ENCODE measurements at regions of chr4 and their contacts with region 1.

Region 1: GRCh38 chr4:156060661-156061060 is 107.0 kb upstream of the CTSO start:
- DNase-seq: no peak
- ATAC-seq: no peak
- H3K4me3 ChIP-seq: no peak overlapping the region
- H3K27ac ChIP-seq: no peak overlapping the region
- H3K4me1 ChIP-seq: no peaks in the 10 kb centered on the region
- H3K27me3 ChIP-seq: no peaks in the 10 kb centered on the region
- CTCF ChIP-seq: no peak

Region 2: DNA sequence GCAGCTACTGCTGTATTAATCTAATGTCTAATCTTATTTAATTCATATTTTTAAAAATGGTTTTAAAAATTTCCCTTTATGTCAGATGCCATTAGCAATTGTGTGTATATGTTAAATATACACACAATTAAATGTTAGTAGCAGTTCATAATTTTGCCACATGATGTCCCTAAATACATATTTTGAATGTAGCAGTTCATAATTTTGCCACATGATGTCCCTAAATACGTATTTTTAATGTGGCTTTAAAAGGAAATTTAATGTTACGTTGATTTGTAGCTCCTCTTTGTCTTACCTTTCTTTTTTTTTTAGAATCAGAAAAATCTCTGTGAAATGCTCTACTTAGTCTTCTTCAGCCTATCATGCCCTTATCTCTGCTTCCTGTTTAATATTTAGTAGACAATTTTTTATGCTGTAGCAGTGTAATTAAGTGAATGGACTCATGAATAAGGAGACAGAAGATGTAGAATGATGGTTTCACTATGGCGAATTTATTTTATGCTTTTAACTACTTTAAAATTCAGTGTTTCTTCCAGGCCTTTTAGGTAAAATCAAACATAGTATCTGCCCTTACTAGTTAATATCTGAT is 1253.5 kb before region 1 on chr4:
- intact Hi-C with region 1: loop called in 1 of 10 experiments (anchors 5 kb)
- DNase-seq: no peak
- ATAC-seq: no peak
- H3K4me3 ChIP-seq: no peak overlapping the region
- H3K27ac ChIP-seq: no peak overlapping the region
- H3K4me1 ChIP-seq: no peaks in the 10 kb centered on the region
- H3K27me3 ChIP-seq: no peaks in the 10 kb centered on the region
- CTCF ChIP-seq: peak; percentile 11 to 70 (median 59)

Region 3: DNA sequence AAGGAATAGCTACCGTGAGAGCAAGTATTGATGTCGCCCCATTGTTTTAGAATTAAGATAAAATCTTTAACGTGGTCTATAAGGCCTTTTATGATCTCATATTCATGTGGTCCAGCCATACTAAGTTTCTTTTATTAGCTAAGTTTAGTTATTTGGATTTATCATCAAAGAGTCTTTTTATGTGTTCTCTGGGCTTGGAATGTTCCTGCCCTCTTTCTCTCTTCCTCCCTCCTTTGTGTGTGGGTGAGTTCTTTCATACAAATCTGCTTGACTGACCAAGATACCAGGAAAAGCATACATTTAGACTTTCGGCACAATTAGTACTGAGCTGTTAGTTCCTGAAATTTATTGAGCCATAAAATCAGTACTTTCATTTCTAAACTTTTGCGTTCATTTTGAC is 145.9 kb before region 1 on chr4:
- intact Hi-C with region 1: no loop called
- DNase-seq: no peak
- ATAC-seq: no peak
- H3K4me3 ChIP-seq: no peak overlapping the region
- H3K27ac ChIP-seq: no peak overlapping the region
- H3K4me1 ChIP-seq: no peaks in the 10 kb centered on the region
- H3K27me3 ChIP-seq: peaks cover 0 to 4% (median 0%) of the 10 kb centered on the region in 7 donors
- CTCF ChIP-seq: no peak